Activated T-helper 2 cell treated with anti-CD3 and anti-CD28 coated beads, Interferon-gamma antibody, Interleukin-2, Interleukin-4, amounts not matched to agents 10 μg/mL and 5 μg/mL and 100 μg/mL, durations not matched to agents 14 hours and 24 hours and 36 hours (primary cell): ENCODE measurements at regions of chr4 and their contacts with region 1.

Region 1: DNA sequence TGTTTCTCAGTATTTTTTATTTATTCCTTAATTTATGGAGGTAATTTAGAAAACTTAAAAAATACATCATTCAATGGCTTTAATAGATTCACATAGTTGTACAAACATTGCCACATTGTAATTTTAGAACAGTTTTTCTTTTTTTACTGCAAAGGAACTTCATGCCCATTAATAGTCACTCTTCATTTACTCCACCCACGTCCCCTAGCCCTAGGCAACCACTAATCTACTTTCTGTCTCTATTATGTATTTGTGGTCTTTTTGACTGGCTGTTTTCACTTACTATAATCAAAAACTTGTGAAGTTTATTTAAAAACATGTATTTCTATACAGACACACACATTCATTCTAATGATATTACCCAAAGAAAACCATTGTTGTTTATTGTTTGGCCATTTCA is 664.8 kb downstream of the GRID2 start:
- DNase-seq: no peak
- H3K4me3 Mint-ChIP-seq: no peak overlapping the region
- H3K27ac Mint-ChIP-seq: no peak overlapping the region
- H3K4me1 Mint-ChIP-seq: no peaks in the 10 kb centered on the region
- H3K27me3 Mint-ChIP-seq: no peaks in the 10 kb centered on the region

Region 2: GRCh38 chr4:92679149-92679548 is 289.4 kb before region 1 on chr4:
- intact Hi-C with region 1: no loop called
- DNase-seq: no peak
- H3K4me3 Mint-ChIP-seq: no peak overlapping the region
- H3K27ac Mint-ChIP-seq: no peak overlapping the region
- H3K4me1 Mint-ChIP-seq: no peaks in the 10 kb centered on the region
- H3K27me3 Mint-ChIP-seq: no peaks in the 10 kb centered on the region

Region 3: GRCh38 chr4:93018243-93018642 is 49.7 kb after region 1 on chr4:
- intact Hi-C with region 1: loop called (anchors 1 kb)
- DNase-seq: no peak
- H3K4me3 Mint-ChIP-seq: no peak overlapping the region
- H3K27ac Mint-ChIP-seq: no peak overlapping the region
- H3K4me1 Mint-ChIP-seq: no peaks in the 10 kb centered on the region
- H3K27me3 Mint-ChIP-seq: no peaks in the 10 kb centered on the region

Region 4: GRCh38 chr4:93147524-93148212 is 179.1 kb after region 1 on chr4:
- intact Hi-C with region 1: no loop called
- DNase-seq: no peak
- H3K4me3 Mint-ChIP-seq: no peak overlapping the region
- H3K27ac Mint-ChIP-seq: no peak overlapping the region
- H3K4me1 Mint-ChIP-seq: no peaks in the 10 kb centered on the region
- H3K27me3 Mint-ChIP-seq: no peaks in the 10 kb centered on the region